Naive thymus-derived CD4-positive, alpha-beta T cell (primary cell): ENCODE measurements at regions of chr22 and their contacts with region 1.

Region 1: DNA sequence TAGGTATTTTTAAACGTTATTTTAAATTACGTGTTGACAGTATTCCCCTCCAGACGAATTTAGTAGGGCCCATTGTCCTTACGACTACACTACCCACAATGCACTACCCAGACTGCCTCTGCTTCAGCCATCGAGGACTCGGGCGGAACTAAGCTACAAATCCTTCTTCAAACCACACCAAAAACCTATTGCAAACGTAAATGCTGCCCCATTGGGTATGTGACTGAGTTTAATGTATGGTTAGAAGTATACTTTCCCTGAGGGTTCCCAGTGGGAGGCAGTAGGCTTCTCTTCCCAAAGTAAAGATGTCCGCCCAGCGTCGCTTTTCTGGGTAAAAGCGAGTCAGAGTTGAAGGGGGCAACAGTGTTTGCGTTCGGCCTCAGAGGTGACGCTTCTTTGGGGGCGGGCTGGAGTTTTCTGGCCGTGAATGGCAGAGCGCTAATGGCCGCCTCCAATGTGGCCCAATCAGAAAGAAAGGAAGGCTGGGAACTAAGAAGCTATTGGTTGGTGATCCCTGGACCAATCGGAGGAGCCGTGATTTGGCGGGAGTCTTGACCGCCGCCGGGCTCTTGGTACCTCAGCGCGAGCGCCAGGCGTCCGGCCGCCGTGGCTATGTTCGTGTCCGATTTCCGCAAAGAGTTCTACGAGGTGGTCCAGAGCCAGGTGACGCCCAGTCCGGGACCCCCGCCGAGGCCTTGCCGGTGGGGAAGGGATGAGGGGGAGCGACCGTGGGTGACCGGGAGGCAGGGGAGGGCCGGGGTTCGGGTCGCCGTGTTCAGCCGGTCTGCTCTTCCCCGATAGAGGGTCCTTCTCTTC is at the start of gene CDC45:
- DNase-seq: peak; percentile 75 to 96 (median 93)
- ATAC-seq: peak; percentile 94
- H3K4me3 ChIP-seq: peak within 1 kb of the TSS; percentile 85
- H3K4me3 Mint-ChIP-seq: peak within 1 kb of the TSS; percentile 87 to 98 (median 92)
- H3K27ac ChIP-seq: peak within 1 kb of the TSS; percentile 96
- H3K27ac Mint-ChIP-seq: peak within 1 kb of the TSS; percentile 98 to 100 (median 99)
- H3K4me1 ChIP-seq: peaks cover 17 to 19% of the 10 kb centered on the region in 2 donors
- H3K4me1 Mint-ChIP-seq: peaks cover 24 to 43% (median 33%) of the 10 kb centered on the region in 7 donors
- H3K27me3 ChIP-seq: no peaks in the 10 kb centered on the region
- H3K27me3 Mint-ChIP-seq: no peaks in the 10 kb centered on the region
- total RNA-seq, gene CDC45: 0.35 to 57.7 (median 0.85) TPM

Region 2: GRCh38 chr22:19109198-19110067 is 370.1 kb before region 1 on chr22:
- CTCF ChIA-PET with region 1: no interaction called
- POLR2A ChIA-PET with region 1: interaction called, 3 read pairs
- intact Hi-C with region 1: loop called in 1 of 2 experiments (anchors 1 kb)
- DNase-seq: peak in 7 of 9 donors; percentile 62 to 88 (median 84)
- ATAC-seq: peak; percentile 92
- H3K4me3 ChIP-seq: peak overlapping the region; percentile 49
- H3K4me3 Mint-ChIP-seq: peak overlapping the region; percentile 77 to 90 (median 84)
- H3K27ac ChIP-seq: peak overlapping the region; percentile 79
- H3K27ac Mint-ChIP-seq: peak overlapping the region; percentile 84 to 100 (median 97)
- H3K4me1 ChIP-seq: peaks cover 40 to 55% of the 10 kb centered on the region in 2 donors
- H3K4me1 Mint-ChIP-seq: peaks cover 50 to 87% (median 73%) of the 10 kb centered on the region in 7 donors
- H3K27me3 ChIP-seq: no peaks in the 10 kb centered on the region
- H3K27me3 Mint-ChIP-seq: no peaks in the 10 kb centered on the region

Region 3: GRCh38 chr22:19143967-19144400 is 335.6 kb before region 1 on chr22:
- CTCF ChIA-PET with region 1: no interaction called
- POLR2A ChIA-PET with region 1: no interaction called
- intact Hi-C with region 1: loop called (anchors 1 kb)
- DNase-seq: peak in 6 of 9 donors; percentile 8 to 40 (median 26)
- ATAC-seq: no peak
- H3K4me3 ChIP-seq: peak overlapping the region; percentile 83
- H3K4me3 Mint-ChIP-seq: peak overlapping the region; percentile 84 to 99 (median 98)
- H3K27ac ChIP-seq: peak overlapping the region; percentile 93
- H3K27ac Mint-ChIP-seq: peak overlapping the region; percentile 91 to 99 (median 97)
- H3K4me1 ChIP-seq: no peaks in the 10 kb centered on the region
- H3K4me1 Mint-ChIP-seq: peaks cover 8 to 32% (median 18%) of the 10 kb centered on the region in 7 donors
- H3K27me3 ChIP-seq: peaks cover 0 to 1% of the 10 kb centered on the region in 2 donors
- H3K27me3 Mint-ChIP-seq: peaks cover 9 to 33% (median 11%) of the 10 kb centered on the region in 5 donors

Region 4: GRCh38 chr22:19291580-19292457 is 187.7 kb before region 1 on chr22 and contains the start of gene CLTCL1:
- CTCF ChIA-PET with region 1: no interaction called
- POLR2A ChIA-PET with region 1: no interaction called
- intact Hi-C with region 1: loop called (anchors 2 to 10 kb)
- DNase-seq: peak; percentile 38 to 81 (median 67)
- ATAC-seq: peak; percentile 90
- H3K4me3 ChIP-seq: peak within 1 kb of the TSS; percentile 82
- H3K4me3 Mint-ChIP-seq: peak within 1 kb of the TSS; percentile 76 to 93 (median 92)
- H3K27ac ChIP-seq: peak within 1 kb of the TSS; percentile 76
- H3K27ac Mint-ChIP-seq: peak within 1 kb of the TSS; percentile 64 to 93 (median 85)
- H3K4me1 ChIP-seq: peaks cover 6 to 8% of the 10 kb centered on the region in 2 donors
- H3K4me1 Mint-ChIP-seq: peaks cover 13 to 33% (median 25%) of the 10 kb centered on the region in 7 donors
- H3K27me3 ChIP-seq: no peaks in the 10 kb centered on the region
- H3K27me3 Mint-ChIP-seq: peaks cover 5 to 55% (median 23%) of the 10 kb centered on the region in 5 donors
- total RNA-seq, gene CLTCL1: 0.22 to 3.1 (median 1.4) TPM

Region 5: DNA sequence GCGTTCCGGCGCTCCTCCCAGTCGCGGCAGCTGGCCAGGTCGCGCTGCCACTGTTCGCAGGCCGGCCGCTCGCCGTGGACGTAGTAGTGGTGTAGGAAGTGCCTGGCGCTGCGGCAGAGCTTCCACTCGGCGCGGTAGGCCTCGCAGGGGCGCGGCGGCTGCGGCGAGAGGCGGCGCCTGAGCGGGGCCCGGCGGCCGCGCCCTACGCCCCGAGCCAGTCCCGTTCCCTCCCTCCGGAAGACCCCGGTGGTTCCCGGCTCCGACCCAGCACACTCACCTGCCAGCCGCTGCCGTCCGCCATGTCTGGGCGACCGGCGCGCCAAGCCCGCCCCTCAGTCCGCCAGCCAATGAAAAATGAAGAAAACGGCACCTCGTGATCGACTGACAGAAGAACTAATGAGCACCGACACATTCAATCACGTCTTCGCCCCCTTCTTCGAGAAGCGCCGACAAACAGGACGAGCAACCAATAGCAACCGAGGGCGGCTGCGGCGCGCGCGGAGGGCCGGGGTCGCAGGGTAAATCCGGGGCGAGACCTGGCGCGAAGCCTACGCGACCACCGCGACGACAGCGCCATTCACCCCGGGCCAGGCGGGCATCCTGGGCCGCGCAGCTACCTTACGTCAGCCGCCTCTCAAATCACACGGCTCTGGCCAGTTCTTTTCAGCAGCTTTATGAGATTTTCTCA is 32.0 kb before region 1 on chr22 and contains the start of gene C22orf39:
- CTCF ChIA-PET with region 1: interaction called, 3 read pairs
- POLR2A ChIA-PET with region 1: interaction called, 7 read pairs
- intact Hi-C with region 1: loop called (anchors 1 kb)
- DNase-seq: peak; percentile 69 to 93 (median 90)
- ATAC-seq: peak; percentile 94
- H3K4me3 ChIP-seq: peak within 1 kb of the TSS; percentile 65
- H3K4me3 Mint-ChIP-seq: peak within 1 kb of the TSS; percentile 84 to 99 (median 92)
- H3K27ac ChIP-seq: peak within 1 kb of the TSS; percentile 81
- H3K27ac Mint-ChIP-seq: peak within 1 kb of the TSS; percentile 84 to 97 (median 94)
- H3K4me1 ChIP-seq: peaks cover 18 to 26% of the 10 kb centered on the region in 2 donors
- H3K4me1 Mint-ChIP-seq: peaks cover 21 to 61% (median 48%) of the 10 kb centered on the region in 7 donors
- H3K27me3 ChIP-seq: no peaks in the 10 kb centered on the region
- H3K27me3 Mint-ChIP-seq: no peaks in the 10 kb centered on the region
- total RNA-seq, gene C22orf39: 34.2 to 44.9 (median 36.8) TPM

Region 6: DNA sequence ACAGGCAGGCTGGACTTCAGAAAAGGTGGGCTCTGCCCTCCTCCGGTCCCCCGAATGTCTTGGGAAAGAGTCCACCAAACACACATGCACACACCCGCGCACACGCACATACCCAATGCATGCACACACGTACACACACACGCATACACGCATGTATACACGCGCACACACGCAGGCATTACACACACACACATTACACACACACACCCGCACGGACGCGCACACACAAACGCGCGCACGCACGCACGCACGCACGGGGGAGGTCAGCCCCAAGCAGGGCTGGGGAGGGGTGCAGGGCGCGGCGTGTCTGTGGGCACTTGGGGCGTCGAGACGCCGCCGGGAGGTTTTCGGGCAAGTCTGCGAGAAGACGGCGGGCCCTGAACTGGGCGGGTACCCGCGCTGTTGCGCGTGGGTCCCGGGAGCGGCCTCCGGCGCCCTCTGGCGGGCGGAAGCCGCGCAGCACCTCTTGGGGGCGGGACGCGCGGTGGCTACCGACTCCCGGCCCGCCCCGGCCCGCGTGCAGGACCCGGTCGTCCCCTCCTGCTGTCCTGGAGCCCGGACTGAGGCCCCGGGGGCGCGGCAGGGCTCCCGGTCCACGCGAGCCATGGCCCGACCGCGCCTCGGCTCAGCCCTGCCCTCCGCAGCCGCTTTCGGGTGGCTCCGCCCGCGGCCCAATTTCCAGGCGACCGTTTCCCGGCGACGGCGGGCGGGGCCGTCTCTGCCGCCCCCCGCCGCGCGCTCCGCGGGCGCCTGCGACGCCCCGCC is 238.3 kb after region 1 on chr22:
- CTCF ChIA-PET with region 1: no interaction called
- POLR2A ChIA-PET with region 1: no interaction called
- intact Hi-C with region 1: loop called in 1 of 2 experiments (anchors 10 kb)
- DNase-seq: peak; percentile 68 to 93 (median 86)
- ATAC-seq: peak; percentile 97
- H3K4me3 ChIP-seq: peak overlapping the region; percentile 41
- H3K4me3 Mint-ChIP-seq: peak overlapping the region; percentile 72 to 88 (median 82)
- H3K27ac ChIP-seq: no peak overlapping the region
- H3K27ac Mint-ChIP-seq: peak overlapping the region in 3 of 9 donors; percentile 5 to 14 (median 9)
- H3K4me1 ChIP-seq: peaks cover 0 to 10% of the 10 kb centered on the region in 2 donors
- H3K4me1 Mint-ChIP-seq: peaks cover 0 to 10% (median 8%) of the 10 kb centered on the region in 7 donors
- H3K27me3 ChIP-seq: peaks cover 0 to 3% of the 10 kb centered on the region in 2 donors
- H3K27me3 Mint-ChIP-seq: peaks cover 28 to 59% (median 35%) of the 10 kb centered on the region in 5 donors